Left ventricle myocardium inferior (tissue), 1 donor: ENCODE measurements at regions of chr2 and their contacts with region 1.

Region 1: GRCh38 chr2:234500394-234501006 is 3.6 kb upstream of the ARL4C start:
- DNase-seq: no peak
- H3K4me3 ChIP-seq: no peak overlapping the region
- H3K27ac ChIP-seq: no peak overlapping the region
- H3K4me1 ChIP-seq: peaks cover 14% of the 10 kb centered on the region
- H3K27me3 ChIP-seq: peaks cover 27% of the 10 kb centered on the region
- CTCF ChIP-seq: peak; percentile 70

Region 2: DNA sequence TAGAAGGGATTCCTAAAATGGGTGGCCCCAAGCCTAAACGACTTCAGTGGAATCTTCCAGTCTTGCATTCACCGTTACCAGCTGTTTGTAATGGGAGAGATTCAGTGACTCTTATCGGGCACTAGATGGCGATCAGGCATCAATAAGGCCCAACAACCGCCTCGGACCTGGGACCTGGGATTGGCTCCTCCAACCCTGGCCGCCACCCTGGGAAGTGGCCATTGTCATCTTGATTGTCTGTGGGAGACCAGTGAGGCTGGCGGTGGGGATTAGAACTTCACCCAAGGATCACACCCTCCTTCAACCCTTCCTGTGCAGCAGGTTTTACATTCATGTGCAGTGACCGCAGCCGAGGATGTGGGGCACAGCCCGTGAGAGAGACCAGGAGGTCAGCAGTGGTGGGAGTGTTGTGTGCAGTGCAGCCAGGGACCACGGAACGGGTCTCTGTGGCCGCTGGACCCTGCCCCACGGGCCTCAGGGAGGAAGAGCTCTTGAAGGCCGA is 364.7 kb before region 1 on chr2:
- intact Hi-C with region 1: loop called (anchors 5 kb)
- DNase-seq: peak; percentile 29
- H3K4me3 ChIP-seq: no peak overlapping the region
- H3K27ac ChIP-seq: no peak overlapping the region
- H3K4me1 ChIP-seq: no peaks in the 10 kb centered on the region
- H3K27me3 ChIP-seq: peaks cover 56% of the 10 kb centered on the region
- CTCF ChIP-seq: peak; percentile 82

Region 3: DNA sequence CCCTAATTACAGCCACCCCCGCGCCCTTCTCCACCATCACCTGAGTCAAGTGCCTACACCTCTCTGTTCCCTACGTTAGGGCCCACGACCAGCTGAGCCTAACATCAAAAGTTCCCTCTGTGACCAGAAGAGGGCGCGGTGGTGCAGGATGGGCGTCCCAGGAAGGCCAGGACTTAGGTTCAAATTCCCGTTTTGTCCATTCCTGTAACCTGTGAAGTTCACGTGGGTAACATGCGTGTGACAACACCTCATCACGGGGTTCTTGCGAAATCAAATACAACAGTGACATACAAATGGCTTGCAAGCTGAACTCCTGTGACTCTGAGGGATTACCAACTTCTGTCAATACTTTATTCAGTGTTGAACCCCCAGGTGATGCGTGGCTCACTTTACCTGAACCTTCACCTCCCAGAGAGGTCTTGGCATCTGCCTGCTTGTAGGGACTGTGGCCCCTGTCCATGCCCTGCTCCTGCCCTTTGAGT is 211.5 kb before region 1 on chr2:
- intact Hi-C with region 1: loop called (anchors 10 kb)
- DNase-seq: peak; percentile 51
- H3K4me3 ChIP-seq: no peak overlapping the region
- H3K27ac ChIP-seq: no peak overlapping the region
- H3K4me1 ChIP-seq: peaks cover 25% of the 10 kb centered on the region
- H3K27me3 ChIP-seq: no peaks in the 10 kb centered on the region
- CTCF ChIP-seq: peak; percentile 85